H1 (cell line): ENCODE measurements at regions of chr1 and their contacts with region 1.

Region 1: GRCh38 chr1:171226747-171227370 is 21.4 kb upstream of the FMO1 start:
- DNase-seq: no peak
- H3K4me3 ChIP-seq: no peak overlapping the region
- H3K27ac ChIP-seq: no peak overlapping the region
- H3K4me1 ChIP-seq: peaks cover 2 to 6% (median 6%) of the 10 kb centered on the region in 4 experiments; a peak in 5 of 7 replicates
- H3K27me3 ChIP-seq: no peaks in the 10 kb centered on the region
- CTCF ChIP-seq: peak in 2 of 3 experiments; percentile 85 to 93; a peak in 3 of 4 replicates
- EP300 ChIP-seq: no peak
- POLR2A ChIP-seq: no peak
- RAD21 ChIP-seq: peak; percentile 99

Region 2: DNA sequence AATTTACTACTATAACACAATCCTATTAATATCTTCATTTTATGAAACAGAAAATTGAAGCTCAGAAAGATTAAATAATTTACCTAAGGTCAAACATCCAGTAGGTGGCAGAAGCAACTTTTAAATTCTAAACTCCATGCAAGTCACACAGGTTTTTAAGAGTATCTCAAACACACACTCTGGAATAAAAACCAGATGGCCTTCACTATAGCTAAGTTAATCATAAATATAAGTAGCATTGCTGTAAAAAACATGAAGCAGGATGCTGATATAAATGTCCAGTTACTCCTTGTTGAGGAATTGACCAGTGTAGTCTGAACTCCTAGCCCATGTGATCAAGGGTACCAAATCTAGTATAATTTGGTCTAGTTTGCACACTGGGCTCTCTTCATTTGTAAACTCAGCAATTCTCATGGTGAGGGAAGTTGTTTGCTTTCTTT is 145.5 kb before region 1 on chr1:
- CTCF ChIA-PET with region 1: interaction called, 29 read pairs
- POLR2A ChIA-PET with region 1: no interaction called
- DNase-seq: no peak
- H3K4me3 ChIP-seq: no peak overlapping the region
- H3K27ac ChIP-seq: no peak overlapping the region
- H3K4me1 ChIP-seq: no peaks in the 10 kb centered on the region
- H3K27me3 ChIP-seq: no peaks in the 10 kb centered on the region
- CTCF ChIP-seq: peak in 2 of 3 experiments; percentile 25 to 32; a peak in 2 of 4 replicates
- EP300 ChIP-seq: no peak
- POLR2A ChIP-seq: no peak
- RAD21 ChIP-seq: peak; percentile 54 to 58

Region 3: DNA sequence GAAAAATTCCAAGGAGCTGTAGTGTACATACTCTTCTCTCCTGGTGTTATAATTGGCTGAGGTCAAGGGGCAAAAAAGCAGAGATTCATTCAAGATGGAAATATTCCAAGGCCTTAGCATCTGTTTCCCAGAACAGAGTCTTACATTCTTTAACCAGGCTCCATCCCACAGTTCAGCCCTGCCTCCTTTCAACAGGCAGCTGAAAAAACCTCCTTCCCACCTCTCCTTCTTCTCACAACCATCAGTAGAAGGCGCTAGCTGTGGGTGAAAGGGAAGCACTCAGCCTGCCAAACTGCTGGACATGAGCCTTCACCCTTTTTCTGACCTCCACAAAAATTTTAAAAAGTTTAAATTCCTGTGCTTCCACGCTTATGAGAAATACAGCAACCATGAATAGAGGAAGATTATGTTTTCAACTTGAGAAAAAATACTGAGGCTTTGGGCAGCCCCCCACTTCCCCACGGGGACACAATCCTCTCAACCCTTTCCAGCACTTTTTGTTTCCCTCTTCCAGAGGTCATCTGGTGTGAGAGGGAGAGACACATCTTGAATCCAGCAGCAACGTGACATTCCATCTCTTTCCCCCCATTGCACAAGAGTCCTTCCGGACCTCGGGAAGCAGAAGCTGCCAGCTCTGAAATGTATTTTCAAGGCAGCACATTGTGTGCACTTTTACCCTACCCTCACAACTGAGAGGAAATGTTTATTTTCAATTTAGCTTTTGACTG is 85.0 kb before region 1 on chr1:
- CTCF ChIA-PET with region 1: interaction called, 20 read pairs
- POLR2A ChIA-PET with region 1: no interaction called
- DNase-seq: no peak
- H3K4me3 ChIP-seq: no peak overlapping the region
- H3K27ac ChIP-seq: no peak overlapping the region
- H3K4me1 ChIP-seq: peaks cover 0 to 6% (median 0%) of the 10 kb centered on the region in 4 experiments; a peak in 1 of 7 replicates
- H3K27me3 ChIP-seq: no peaks in the 10 kb centered on the region
- CTCF ChIP-seq: peak; percentile 52 to 76 (median 56)
- EP300 ChIP-seq: no peak
- POLR2A ChIP-seq: no peak
- RAD21 ChIP-seq: peak; percentile 36 to 50

Region 4: DNA sequence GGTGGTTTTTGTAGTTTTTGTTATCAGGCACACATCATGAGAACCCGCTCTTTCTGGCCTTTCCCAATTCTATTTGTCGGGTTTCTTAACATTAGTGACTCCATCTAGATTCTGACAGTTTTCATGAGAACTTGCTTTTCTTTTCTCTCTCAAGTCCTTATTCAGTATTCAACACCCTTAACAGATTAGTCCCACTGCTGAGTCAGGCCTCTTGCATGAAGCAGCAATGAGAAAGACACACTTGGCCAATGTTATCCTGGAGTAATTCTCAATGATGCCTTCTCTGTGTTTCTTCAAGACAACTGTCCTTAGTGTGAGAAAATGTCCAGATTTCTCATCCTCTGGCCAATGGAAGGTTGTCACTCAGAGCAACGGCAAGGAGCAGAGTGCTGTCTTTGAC is 30.5 kb before region 1 on chr1:
- CTCF ChIA-PET with region 1: interaction called, 19 read pairs
- POLR2A ChIA-PET with region 1: no interaction called
- DNase-seq: no peak
- H3K4me3 ChIP-seq: no peak overlapping the region
- H3K27ac ChIP-seq: no peak overlapping the region
- H3K4me1 ChIP-seq: no peaks in the 10 kb centered on the region
- H3K27me3 ChIP-seq: no peaks in the 10 kb centered on the region
- CTCF ChIP-seq: no peak
- EP300 ChIP-seq: no peak
- POLR2A ChIP-seq: no peak
- RAD21 ChIP-seq: no peak

Region 5: DNA sequence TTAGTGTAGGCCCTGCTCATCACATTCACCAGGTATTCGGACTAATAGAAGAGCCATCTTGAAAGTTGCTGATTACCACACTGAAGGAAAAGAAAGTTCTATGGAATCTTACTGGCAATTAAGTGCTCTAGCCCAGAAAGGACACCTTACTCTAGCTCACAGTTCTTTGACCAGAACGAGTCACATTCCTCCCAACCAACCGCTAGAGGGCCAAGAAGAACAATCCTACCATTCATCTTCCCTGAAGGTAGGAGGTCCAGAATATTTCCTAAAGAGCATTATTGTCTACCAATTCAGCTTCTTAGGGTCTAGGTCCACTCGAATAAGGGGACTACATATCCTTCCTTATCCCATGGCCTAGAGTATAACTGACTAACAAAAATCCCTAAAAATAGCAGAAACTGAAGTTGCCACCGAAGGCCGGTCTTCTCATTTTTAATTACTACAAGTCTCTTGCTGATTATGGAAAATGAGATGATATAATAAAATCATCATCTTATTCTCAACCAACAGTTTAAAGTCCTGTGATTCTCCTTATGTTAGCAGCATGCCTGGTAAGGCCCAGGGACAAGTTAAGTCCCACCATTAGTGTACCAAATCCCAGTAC is 18.7 kb after region 1 on chr1:
- CTCF ChIA-PET with region 1: interaction called, 39 read pairs
- POLR2A ChIA-PET with region 1: no interaction called
- DNase-seq: no peak
- H3K4me3 ChIP-seq: no peak overlapping the region
- H3K27ac ChIP-seq: no peak overlapping the region
- H3K4me1 ChIP-seq: peaks cover 0 to 4% (median 0%) of the 10 kb centered on the region in 4 experiments; a peak in 2 of 7 replicates
- H3K27me3 ChIP-seq: no peaks in the 10 kb centered on the region; a peak in 1 of 7 replicates
- CTCF ChIP-seq: peak in 2 of 3 experiments; percentile 78 to 87; a peak in 3 of 4 replicates
- EP300 ChIP-seq: no peak
- POLR2A ChIP-seq: no peak
- RAD21 ChIP-seq: peak; percentile 55 to 72

Region 6: GRCh38 chr1:171313835-171314320 is 87.0 kb after region 1 on chr1 and contains the start of gene FMO4:
- CTCF ChIA-PET with region 1: interaction called, 47 read pairs
- POLR2A ChIA-PET with region 1: interaction called, 3 read pairs
- DNase-seq: peak; percentile 69 to 78
- H3K4me3 ChIP-seq: peak within 1 kb of the TSS in 3 of 4 experiments; percentile 6 to 56 (median 16); a peak in 4 of 8 replicates
- H3K27ac ChIP-seq: no peak within 1 kb of the TSS
- H3K4me1 ChIP-seq: peaks cover 0 to 3% (median 0%) of the 10 kb centered on the region in 4 experiments; a peak in 3 of 7 replicates
- H3K27me3 ChIP-seq: no peaks in the 10 kb centered on the region
- CTCF ChIP-seq: peak in 2 of 3 experiments; percentile 79 to 91; a peak in 3 of 4 replicates
- EP300 ChIP-seq: no peak
- POLR2A ChIP-seq: no peak
- RAD21 ChIP-seq: peak; percentile 89 to 91
- total RNA-seq, gene FMO4: 2.2 and 2.3 TPM in 2 replicates